T-cell (primary cell): ENCODE measurements at regions of chr10 and their contacts with region 1.

Region 1: GRCh38 chr10:101067356-101068083 is 5.7 kb downstream of the KAZALD1 start:
- DNase-seq: peak; percentile 31 to 87 (median 59)
- ATAC-seq: peak; percentile 74 to 81 (median 77)
- H3K4me3 ChIP-seq: peak overlapping the region; percentile 57 to 61
- H3K4me3 Mint-ChIP-seq: peak overlapping the region; percentile 82 to 85 (median 84)
- H3K27ac ChIP-seq: no peak overlapping the region
- H3K27ac Mint-ChIP-seq: no peak overlapping the region
- H3K4me1 ChIP-seq: peaks cover 6 to 36% of the 10 kb centered on the region in 2 experiments
- H3K4me1 Mint-ChIP-seq: peaks cover 7 to 37% (median 22%) of the 10 kb centered on the region in 3 donors
- H3K27me3 ChIP-seq: peaks cover 8 to 61% of the 10 kb centered on the region in 2 experiments
- H3K27me3 Mint-ChIP-seq: peaks cover 37 to 49% of the 10 kb centered on the region in 2 donors

Region 2: GRCh38 chr10:101050208-101051069 is 17.1 kb before region 1 on chr10:
- CTCF ChIA-PET with region 1: interaction called, 3 to 42 read pairs
- POLR2A ChIA-PET with region 1: no interaction called
- DNase-seq: peak; percentile 42 to 82 (median 70)
- ATAC-seq: peak; percentile 85 to 93 (median 88)
- H3K4me3 ChIP-seq: peak overlapping the region in 1 of 2 donors; percentile 8
- H3K4me3 Mint-ChIP-seq: peak overlapping the region in 1 of 3 donors; percentile 36
- H3K27ac ChIP-seq: no peak overlapping the region
- H3K27ac Mint-ChIP-seq: no peak overlapping the region
- H3K4me1 ChIP-seq: peaks cover 0 to 19% of the 10 kb centered on the region in 2 experiments
- H3K4me1 Mint-ChIP-seq: peaks cover 12 to 21% (median 18%) of the 10 kb centered on the region in 3 donors
- H3K27me3 ChIP-seq: peaks cover 16 to 62% of the 10 kb centered on the region in 2 experiments
- H3K27me3 Mint-ChIP-seq: peaks cover 43 to 50% of the 10 kb centered on the region in 2 donors